CD14-positive monocyte (primary cell): ENCODE measurements at regions of chr3 and their contacts with region 1.

Region 1: GRCh38 chr3:14548321-14548729 is 8.2 kb upstream of the GRIP2 start:
- DNase-seq: peak in 2 of 3 donors; percentile 12 to 19
- H3K4me3 ChIP-seq: no peak overlapping the region
- H3K4me3 Mint-ChIP-seq: peak overlapping the region in 1 of 2 donors; percentile 27
- H3K27ac ChIP-seq: no peak overlapping the region
- H3K27ac Mint-ChIP-seq: no peak overlapping the region
- H3K4me1 ChIP-seq: no peaks in the 10 kb centered on the region
- H3K4me1 Mint-ChIP-seq: no peaks in the 10 kb centered on the region
- H3K27me3 ChIP-seq: peaks cover 0 to 4% of the 10 kb centered on the region in 2 donors
- H3K27me3 Mint-ChIP-seq: peaks cover 12 to 41% (median 20%) of the 10 kb centered on the region in 3 donors
- CTCF ChIP-seq: peak; percentile 38

Region 2: DNA sequence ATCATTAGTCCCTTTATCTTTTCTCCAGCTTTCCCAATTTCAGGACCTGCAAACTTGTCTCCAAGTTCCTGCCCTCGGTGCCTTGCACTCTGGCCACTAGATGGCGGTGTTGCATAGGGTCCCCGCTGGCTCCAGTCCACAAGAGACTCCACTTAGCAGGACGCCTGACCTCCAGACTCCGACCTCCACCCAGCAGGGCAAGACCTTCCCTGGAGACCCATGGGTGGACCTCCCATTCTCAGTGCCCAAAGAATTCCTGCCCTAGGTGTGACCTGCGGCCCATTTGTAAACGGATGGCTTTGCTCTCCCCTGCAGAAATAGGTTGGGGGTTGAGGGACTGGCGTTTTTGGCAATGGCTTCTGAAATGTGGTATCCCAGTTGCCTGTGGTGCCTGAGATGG is 287.1 kb before region 1 on chr3:
- intact Hi-C with region 1: loop called in 1 of 2 experiments (anchors 5 kb)
- DNase-seq: peak; percentile 66 to 76 (median 68)
- H3K4me3 ChIP-seq: no peak overlapping the region
- H3K4me3 Mint-ChIP-seq: no peak overlapping the region
- H3K27ac ChIP-seq: no peak overlapping the region
- H3K27ac Mint-ChIP-seq: no peak overlapping the region
- H3K4me1 ChIP-seq: no peaks in the 10 kb centered on the region
- H3K4me1 Mint-ChIP-seq: peaks cover 2% of the 10 kb centered on the region
- H3K27me3 ChIP-seq: no peaks in the 10 kb centered on the region
- H3K27me3 Mint-ChIP-seq: peaks cover 0 to 2% (median 0%) of the 10 kb centered on the region in 3 donors
- CTCF ChIP-seq: peak; percentile 93